ENCODE measurements at regions of chr11 and their contacts with region 1.

Region 1: GRCh38 chr11:59607703-59608454 is 7.7 kb downstream of the OSBP start:
- DNase-seq: no peak
- H3K4me3 ChIP-seq: no peak overlapping the region
- H3K27ac ChIP-seq: no peak overlapping the region
- H3K4me1 ChIP-seq: peaks cover under 1% of the 10 kb centered on the region
- H3K27me3 ChIP-seq: no peaks in the 10 kb centered on the region
- CTCF ChIP-seq: no peak

Region 2: GRCh38 chr11:59394186-59394585 is 213.7 kb before region 1 on chr11:
- CTCF ChIA-PET with region 1: no interaction called
- dilution Hi-C with region 1: no loop called
- in situ Hi-C with region 1: no loop called
- intact Hi-C with region 1: no loop called
- DNase-seq: no peak
- H3K4me3 ChIP-seq: no peak overlapping the region
- H3K27ac ChIP-seq: no peak overlapping the region
- H3K4me1 ChIP-seq: no peaks in the 10 kb centered on the region
- H3K27me3 ChIP-seq: no peaks in the 10 kb centered on the region
- CTCF ChIP-seq: no peak

Region 3: GRCh38 chr11:59641156-59641555 is 33.3 kb after region 1 on chr11:
- CTCF ChIA-PET with region 1: no interaction called
- dilution Hi-C with region 1: no loop called
- in situ Hi-C with region 1: no loop called
- intact Hi-C with region 1: loop called (anchors 5 kb)
- DNase-seq: no peak
- H3K4me3 ChIP-seq: no peak overlapping the region
- H3K27ac ChIP-seq: no peak overlapping the region
- H3K4me1 ChIP-seq: no peaks in the 10 kb centered on the region
- H3K27me3 ChIP-seq: no peaks in the 10 kb centered on the region
- CTCF ChIP-seq: no peak

Region 4: DNA sequence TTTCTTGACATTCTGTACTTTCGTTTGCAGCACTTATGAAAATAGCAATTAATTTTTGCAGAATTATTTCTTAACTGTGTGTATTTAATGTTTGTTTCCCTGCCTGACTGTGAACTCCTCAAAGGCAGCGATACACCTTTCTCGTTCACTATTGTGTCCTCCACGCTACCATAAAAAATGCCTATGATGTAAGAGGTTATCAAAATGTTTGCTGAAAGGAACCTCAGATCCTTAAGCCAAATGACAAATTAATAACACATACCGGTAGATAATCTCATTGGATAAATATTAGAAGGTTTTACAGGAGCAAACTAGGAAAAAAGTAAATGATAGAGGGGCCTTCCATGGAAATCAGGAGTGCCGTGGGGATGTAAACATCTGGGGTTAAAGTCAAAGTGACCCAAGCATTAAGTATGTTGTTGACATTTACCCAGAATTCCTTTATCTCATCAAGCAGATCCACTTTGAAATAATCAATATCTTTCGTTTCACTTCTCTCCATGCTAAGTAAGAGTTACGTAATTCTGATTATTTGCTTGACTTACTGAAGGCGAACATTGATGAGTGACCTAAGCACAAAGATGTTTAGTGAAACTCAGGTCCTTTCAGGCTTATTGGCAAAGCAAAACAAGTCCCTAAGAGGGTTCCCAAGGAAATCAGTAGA is 268.1 kb after region 1 on chr11:
- CTCF ChIA-PET with region 1: no interaction called
- dilution Hi-C with region 1: no loop called
- in situ Hi-C with region 1: no loop called
- intact Hi-C with region 1: no loop called
- DNase-seq: no peak
- H3K4me3 ChIP-seq: no peak overlapping the region
- H3K27ac ChIP-seq: no peak overlapping the region
- H3K4me1 ChIP-seq: no peaks in the 10 kb centered on the region
- H3K27me3 ChIP-seq: no peaks in the 10 kb centered on the region
- CTCF ChIP-seq: no peak

Measured in mammary epithelial cell (primary cell).